Common myeloid progenitor, CD34-positive (primary cell): ENCODE measurements at regions of chr17 and their contacts with region 1.

Region 1: GRCh38 chr17:35612924-35613521 is 25.9 kb downstream of the AP2B1 start:
- DNase-seq: peak; percentile 67 to 82 (median 74)
- H3K4me3 ChIP-seq: no peak overlapping the region
- H3K27ac ChIP-seq: no peak overlapping the region
- H3K4me1 ChIP-seq: peaks cover 0 to 31% (median 7%) of the 10 kb centered on the region in 4 experiments
- H3K27me3 ChIP-seq: no peaks in the 10 kb centered on the region

Region 2: GRCh38 chr17:35555695-35556094 is 57.3 kb before region 1 on chr17:
- CTCF ChIA-PET with region 1: interaction called, 14 read pairs
- POLR2A ChIA-PET with region 1: interaction called, 5 read pairs
- DNase-seq: peak; percentile 63 to 81 (median 81)
- H3K4me3 ChIP-seq: no peak overlapping the region
- H3K27ac ChIP-seq: no peak overlapping the region
- H3K4me1 ChIP-seq: peaks cover 21 to 50% (median 43%) of the 10 kb centered on the region in 4 experiments
- H3K27me3 ChIP-seq: no peaks in the 10 kb centered on the region

Region 3: GRCh38 chr17:35596530-35597233 is 16.3 kb before region 1 on chr17:
- CTCF ChIA-PET with region 1: interaction called, 22 read pairs
- POLR2A ChIA-PET with region 1: no interaction called
- DNase-seq: no peak
- H3K4me3 ChIP-seq: no peak overlapping the region
- H3K27ac ChIP-seq: no peak overlapping the region
- H3K4me1 ChIP-seq: no peaks in the 10 kb centered on the region
- H3K27me3 ChIP-seq: no peaks in the 10 kb centered on the region

Region 4: GRCh38 chr17:35630530-35631148 is 17.6 kb after region 1 on chr17:
- CTCF ChIA-PET with region 1: interaction called, 18 read pairs
- POLR2A ChIA-PET with region 1: no interaction called
- DNase-seq: no peak
- H3K4me3 ChIP-seq: no peak overlapping the region
- H3K27ac ChIP-seq: no peak overlapping the region
- H3K4me1 ChIP-seq: no peaks in the 10 kb centered on the region
- H3K27me3 ChIP-seq: no peaks in the 10 kb centered on the region

Region 5: GRCh38 chr17:35747540-35748017 is 134.6 kb after region 1 on chr17:
- CTCF ChIA-PET with region 1: interaction called, 131 read pairs
- POLR2A ChIA-PET with region 1: interaction called, 4 read pairs
- DNase-seq: peak; percentile 81 to 91 (median 86)
- H3K4me3 ChIP-seq: no peak overlapping the region
- H3K27ac ChIP-seq: no peak overlapping the region
- H3K4me1 ChIP-seq: peaks cover 0 to 40% (median 30%) of the 10 kb centered on the region in 4 experiments
- H3K27me3 ChIP-seq: peaks cover 0 to 11% (median 0%) of the 10 kb centered on the region in 5 experiments

Region 6: GRCh38 chr17:35808962-35809854 is 196.2 kb after region 1 on chr17 and contains the start of gene TAF15:
- CTCF ChIA-PET with region 1: interaction called, 12 read pairs
- POLR2A ChIA-PET with region 1: interaction called, 3 read pairs
- DNase-seq: peak; percentile 99
- H3K4me3 ChIP-seq: peak within 1 kb of the TSS; percentile 87 to 99 (median 93)
- H3K27ac ChIP-seq: peak within 1 kb of the TSS; percentile 94 to 97
- H3K4me1 ChIP-seq: peaks cover 13 to 52% (median 38%) of the 10 kb centered on the region in 4 experiments
- H3K27me3 ChIP-seq: no peaks in the 10 kb centered on the region

Region 7: DNA sequence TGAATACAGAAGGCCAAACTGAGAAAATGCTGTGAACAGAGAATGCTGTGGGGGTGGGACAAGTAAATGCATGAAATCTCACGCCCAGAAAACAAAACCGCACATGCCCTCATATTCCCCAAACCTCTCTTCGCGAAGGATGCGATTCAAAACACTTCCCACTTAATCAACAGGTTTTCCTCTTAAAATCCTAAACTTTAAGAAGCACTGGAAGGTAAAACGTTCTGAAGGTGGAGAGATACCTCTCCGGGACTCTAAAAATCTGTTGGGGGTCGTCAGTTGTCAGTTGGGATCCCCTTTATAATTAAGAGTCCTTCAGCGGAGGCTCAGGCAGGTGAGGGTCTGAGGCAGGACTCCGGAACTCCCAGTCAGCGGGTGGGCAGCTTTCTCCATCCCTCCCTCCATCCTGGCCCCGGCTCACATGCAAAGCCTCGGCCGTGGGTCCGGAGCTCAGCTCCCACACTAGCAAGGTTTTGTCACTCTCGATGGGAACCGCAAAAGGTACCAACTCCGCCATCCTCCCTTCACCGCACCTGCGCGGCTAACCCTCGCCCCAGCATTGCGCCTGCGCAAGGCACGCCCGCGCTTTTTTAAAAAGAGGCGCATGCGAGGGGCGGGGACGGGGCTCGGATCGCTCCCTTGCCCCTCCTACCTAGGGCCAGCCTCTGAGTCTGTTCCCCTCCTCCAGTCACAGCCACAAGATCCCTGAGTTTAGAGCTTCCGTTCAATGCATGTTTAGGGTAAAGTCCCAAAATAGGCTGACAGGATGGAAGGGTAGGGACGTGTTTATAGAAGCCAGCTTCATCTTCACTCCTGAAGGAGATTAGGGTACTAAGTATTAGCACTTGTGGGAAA is 317.4 kb after region 1 on chr17 and contains the start of gene RDM1:
- CTCF ChIA-PET with region 1: no interaction called
- POLR2A ChIA-PET with region 1: no interaction called
- DNase-seq: peak; percentile 51 to 73 (median 69)
- H3K4me3 ChIP-seq: peak within 1 kb of the TSS; percentile 7 to 89 (median 70)
- H3K27ac ChIP-seq: no peak within 1 kb of the TSS
- H3K4me1 ChIP-seq: peaks cover 0 to 13% (median 12%) of the 10 kb centered on the region in 4 experiments
- H3K27me3 ChIP-seq: no peaks in the 10 kb centered on the region